Heart left ventricle (tissue), 16 donors: ENCODE measurements at regions of chr4 and their contacts with region 1.

Region 1: DNA sequence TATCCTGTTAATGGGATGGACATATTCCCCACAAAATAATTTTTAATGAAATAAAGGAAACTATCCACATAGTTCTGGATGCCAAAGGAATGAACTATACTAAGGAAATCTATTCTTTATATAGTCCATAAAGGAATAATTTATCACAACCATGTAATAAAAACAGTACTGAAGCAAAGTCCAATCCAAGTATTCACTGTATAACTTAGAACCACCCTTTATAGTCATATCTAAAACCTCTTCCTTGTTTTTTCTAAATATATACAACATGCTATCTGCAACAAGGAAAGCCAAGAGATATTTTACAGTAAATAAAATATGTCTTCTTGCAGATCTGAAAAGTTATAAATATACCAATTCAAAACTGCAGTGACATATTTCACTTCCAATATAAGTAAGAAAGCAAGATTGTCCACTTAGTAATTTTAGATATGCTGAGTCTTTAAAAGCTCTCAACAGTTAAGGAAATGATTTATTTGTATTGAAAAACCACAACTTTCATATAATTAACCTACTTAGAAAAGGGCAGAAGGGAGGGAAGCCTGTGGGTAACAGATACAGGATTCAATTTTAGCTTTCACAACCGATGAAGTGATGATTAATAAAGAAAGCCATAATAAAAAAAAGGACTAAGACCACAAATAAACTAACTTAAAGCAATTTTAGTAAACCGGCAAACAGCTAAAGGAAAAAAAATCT is 8.0 kb downstream of the NR3C2 start:
- DNase-seq: no peak
- ATAC-seq: no peak
- H3K4me3 ChIP-seq: peak overlapping the region in 1 of 12 donors; percentile 2
- H3K27ac ChIP-seq: no peak overlapping the region
- H3K4me1 ChIP-seq: peaks cover 0 to 83% (median 50%) of the 10 kb centered on the region in 12 donors
- H3K27me3 ChIP-seq: no peaks in the 10 kb centered on the region
- CTCF ChIP-seq: no peak
- POLR2A ChIP-seq: no peak

Region 2: GRCh38 chr4:148344352-148344751 is 89.9 kb before region 1 on chr4:
- intact Hi-C with region 1: loop called in 1 of 10 experiments (anchors 10 kb)
- DNase-seq: peak in 3 of 5 donors; percentile 33 to 64 (median 38)
- ATAC-seq: peak in 2 of 4 donors; percentile 35 to 44
- H3K4me3 ChIP-seq: no peak overlapping the region
- H3K27ac ChIP-seq: no peak overlapping the region
- H3K4me1 ChIP-seq: peaks cover 0 to 48% (median 17%) of the 10 kb centered on the region in 12 donors
- H3K27me3 ChIP-seq: no peaks in the 10 kb centered on the region
- CTCF ChIP-seq: no peak
- POLR2A ChIP-seq: no peak